Heart right ventricle (tissue), 16 donors: ENCODE measurements at regions of chr16 and their contacts with region 1.

Region 1: GRCh38 chr16:4183237-4184036 is 58.4 kb downstream of the SRL start:
- DNase-seq: peak; percentile 91 to 97
- ATAC-seq: peak; percentile 95 to 98 (median 96)
- H3K4me3 ChIP-seq: peak overlapping the region; percentile 62 to 84 (median 72)
- H3K27ac ChIP-seq: peak overlapping the region; percentile 79 to 100 (median 94)
- H3K4me1 ChIP-seq: peaks cover 3 to 20% (median 8%) of the 10 kb centered on the region in 9 donors
- H3K27me3 ChIP-seq: peaks cover 0 to 13% (median 0%) of the 10 kb centered on the region in 7 donors
- CTCF ChIP-seq: peak in 4 of 9 donors; percentile 11 to 45 (median 42)

Region 2: DNA sequence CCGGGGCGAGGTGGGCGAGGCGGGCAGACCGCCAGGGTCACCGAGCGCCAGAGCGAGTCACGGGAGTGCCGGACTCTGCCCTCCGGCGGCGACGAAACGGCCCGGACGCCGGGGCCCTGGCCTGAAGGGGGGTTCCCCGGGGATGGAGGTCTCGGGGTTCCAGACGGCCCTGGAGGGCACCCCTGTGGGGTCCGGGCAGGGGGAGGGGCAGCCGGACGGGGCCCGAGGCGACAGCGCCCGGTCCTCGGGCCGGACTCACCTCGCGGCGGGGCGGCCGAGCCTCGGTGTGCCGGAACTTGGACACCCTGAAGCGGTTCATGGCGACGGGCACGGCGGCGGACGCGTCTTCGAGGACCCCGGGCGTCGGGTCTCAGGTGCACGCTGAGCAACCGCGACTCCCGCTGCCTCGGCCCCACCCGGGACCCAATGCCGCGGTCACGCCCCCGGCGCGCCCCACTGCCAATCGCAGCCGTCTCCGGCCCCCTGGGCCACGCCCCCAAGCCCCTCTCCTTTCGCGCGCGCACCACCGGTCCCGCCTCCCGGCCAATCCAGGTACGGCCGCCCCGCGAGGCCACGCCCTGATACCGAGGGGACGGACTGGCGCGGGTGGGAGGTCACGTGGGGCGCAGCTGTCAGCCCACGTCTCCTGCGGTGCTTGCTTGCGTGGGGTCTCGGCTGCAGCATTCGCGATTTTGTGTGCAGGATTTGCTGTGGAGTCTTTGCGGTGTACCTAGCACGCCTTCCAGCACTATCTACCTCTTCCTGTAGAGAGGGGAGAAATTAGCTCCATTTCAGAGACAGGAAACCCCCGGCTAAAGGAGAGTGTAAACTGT is 233.0 kb after region 1 on chr16 and contains the start of gene CORO7:
- intact Hi-C with region 1: loop called in 1 of 10 experiments (anchors 5 kb)
- DNase-seq: peak; percentile 97 to 98
- ATAC-seq: peak; percentile 95 to 97 (median 96)
- H3K4me3 ChIP-seq: peak within 1 kb of the TSS; percentile 77 to 99 (median 94)
- H3K27ac ChIP-seq: peak within 1 kb of the TSS; percentile 56 to 95 (median 86)
- H3K4me1 ChIP-seq: peaks cover 6 to 62% (median 30%) of the 10 kb centered on the region in 9 donors
- H3K27me3 ChIP-seq: no peaks in the 10 kb centered on the region
- CTCF ChIP-seq: no peak
- total RNA-seq, gene CORO7: 6.5 to 21.8 (median 10.1) TPM